ENCODE measurements at regions of chr9 and their contacts with region 1.

Region 1: DNA sequence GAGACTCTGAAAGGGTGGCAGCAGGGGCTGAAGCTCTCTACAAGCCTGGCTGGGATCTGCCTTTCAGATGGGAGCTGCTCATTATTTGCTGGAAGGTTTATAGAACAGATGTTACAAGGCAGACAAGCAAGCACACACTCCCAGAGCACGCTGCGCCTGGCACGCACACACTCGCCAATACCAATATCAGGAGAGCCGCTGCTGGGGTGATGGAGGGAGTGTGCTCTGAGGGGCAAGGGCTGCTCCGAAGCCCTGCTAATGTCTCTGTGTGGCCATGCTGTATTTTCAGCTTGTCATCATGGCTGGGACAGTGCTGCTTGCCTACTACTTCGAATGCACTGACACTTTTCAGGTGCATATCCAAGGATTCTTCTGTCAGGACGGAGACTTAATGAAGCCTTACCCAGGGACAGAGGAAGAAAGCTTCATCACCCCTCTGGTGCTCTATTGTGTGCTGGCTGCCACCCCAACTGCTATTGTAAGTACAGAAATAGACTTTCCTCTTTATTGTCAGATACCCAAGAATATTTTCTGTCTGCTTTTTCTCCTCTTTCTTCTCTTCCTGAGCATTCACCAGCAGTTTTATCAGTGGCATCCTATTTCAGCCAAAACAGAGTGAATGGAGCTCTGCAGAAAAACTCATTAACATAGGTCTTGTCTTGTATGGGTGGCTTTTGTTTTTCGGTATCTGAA is 115.1 kb downstream of the BAAT start:
- DNase-seq: no peak
- ATAC-seq: no peak
- H3K4me3 ChIP-seq: no peak overlapping the region
- H3K27ac ChIP-seq: no peak overlapping the region
- H3K4me1 ChIP-seq: no peaks in the 10 kb centered on the region
- H3K27me3 ChIP-seq: no peaks in the 10 kb centered on the region; a peak in 1 of 5 replicates
- CTCF ChIP-seq: no peak
- EP300 ChIP-seq: no peak
- POLR2A ChIP-seq: no peak
- RAD21 ChIP-seq: no peak

Region 2: DNA sequence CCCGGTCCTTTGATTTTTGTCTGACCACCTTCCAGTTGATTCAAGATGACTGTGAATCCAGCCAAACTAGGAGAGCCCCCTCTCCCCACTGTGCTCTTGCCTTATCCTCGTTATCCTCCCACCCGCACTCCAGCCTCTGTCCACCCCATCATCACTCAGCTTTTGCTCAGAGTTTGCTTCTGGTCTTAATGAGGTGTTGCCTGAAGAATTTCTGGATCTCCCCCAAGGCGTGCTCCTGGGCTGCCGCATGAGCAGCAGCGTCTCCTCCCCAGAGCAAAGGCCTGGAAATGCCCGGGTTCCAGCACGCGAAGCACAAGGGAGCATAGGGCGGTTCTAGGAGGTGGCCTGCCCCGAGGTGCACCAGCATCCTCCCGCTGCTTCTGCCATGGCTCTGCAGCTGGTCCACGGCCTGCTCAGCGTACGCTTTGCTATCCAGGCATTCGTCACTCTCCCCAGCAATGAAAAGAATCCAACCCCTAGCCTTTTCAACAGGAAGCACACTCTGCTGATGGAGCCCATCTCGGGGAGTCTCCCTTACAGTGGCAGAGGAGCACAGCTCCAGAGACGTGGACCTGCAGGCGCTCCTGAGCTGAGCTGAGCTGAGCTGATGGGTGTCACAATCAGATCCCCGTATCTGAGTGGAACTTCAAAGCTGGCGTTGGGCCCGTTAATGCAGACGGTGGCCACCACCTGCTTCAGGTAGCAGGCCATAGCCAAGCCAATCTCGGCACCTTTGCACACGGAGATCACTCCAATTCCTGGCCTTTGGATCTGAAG is 64.4 kb after region 1 on chr9:
- CTCF ChIA-PET with region 1: no interaction called
- POLR2A ChIA-PET with region 1: no interaction called
- in situ Hi-C with region 1: no loop called
- intact Hi-C with region 1: loop called (anchors 10 kb)
- DNase-seq: no peak
- ATAC-seq: peak; percentile 58
- H3K4me3 ChIP-seq: no peak overlapping the region
- H3K27ac ChIP-seq: no peak overlapping the region
- H3K4me1 ChIP-seq: peaks cover 0 to 5% of the 10 kb centered on the region in 2 experiments; a peak in 4 of 5 replicates
- H3K27me3 ChIP-seq: no peaks in the 10 kb centered on the region
- CTCF ChIP-seq: no peak
- EP300 ChIP-seq: no peak
- POLR2A ChIP-seq: no peak
- RAD21 ChIP-seq: no peak

Measured in K562 (cell line).